Activated CD4-positive, alpha-beta memory T cell treated with anti-CD3 and anti-CD28 coated beads, Interleukin-2, amount 10 ng/mL, durations not matched to agents 7 days and 5 days (primary cell): ENCODE measurements at regions of chr2 and their contacts with region 1.

Region 1: DNA sequence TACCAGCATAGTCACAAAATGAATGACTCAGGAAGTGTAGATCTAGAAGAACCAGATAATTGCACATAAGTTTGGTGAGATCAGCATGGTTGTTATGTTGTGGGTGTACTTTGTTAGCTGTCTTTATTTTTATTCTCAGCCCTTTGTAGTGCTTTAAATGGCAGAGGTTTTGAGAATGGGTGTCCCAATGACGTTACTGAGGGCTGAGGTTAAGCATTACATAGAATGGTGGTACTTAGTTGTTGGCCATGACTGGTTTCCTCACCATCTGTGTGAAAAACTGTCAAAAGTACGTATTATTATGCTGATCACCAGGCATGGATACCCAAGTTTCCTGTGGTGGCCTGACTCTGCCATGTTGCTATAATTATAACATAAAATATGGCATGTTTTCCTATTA is 165.8 kb downstream of the UBE2E3 start:
- DNase-seq: no peak
- H3K4me3 Mint-ChIP-seq: no peak overlapping the region
- H3K27ac Mint-ChIP-seq: peak overlapping the region; percentile 42
- H3K4me1 Mint-ChIP-seq: peaks cover 62% of the 10 kb centered on the region
- H3K27me3 Mint-ChIP-seq: peaks cover under 1% of the 10 kb centered on the region

Region 2: DNA sequence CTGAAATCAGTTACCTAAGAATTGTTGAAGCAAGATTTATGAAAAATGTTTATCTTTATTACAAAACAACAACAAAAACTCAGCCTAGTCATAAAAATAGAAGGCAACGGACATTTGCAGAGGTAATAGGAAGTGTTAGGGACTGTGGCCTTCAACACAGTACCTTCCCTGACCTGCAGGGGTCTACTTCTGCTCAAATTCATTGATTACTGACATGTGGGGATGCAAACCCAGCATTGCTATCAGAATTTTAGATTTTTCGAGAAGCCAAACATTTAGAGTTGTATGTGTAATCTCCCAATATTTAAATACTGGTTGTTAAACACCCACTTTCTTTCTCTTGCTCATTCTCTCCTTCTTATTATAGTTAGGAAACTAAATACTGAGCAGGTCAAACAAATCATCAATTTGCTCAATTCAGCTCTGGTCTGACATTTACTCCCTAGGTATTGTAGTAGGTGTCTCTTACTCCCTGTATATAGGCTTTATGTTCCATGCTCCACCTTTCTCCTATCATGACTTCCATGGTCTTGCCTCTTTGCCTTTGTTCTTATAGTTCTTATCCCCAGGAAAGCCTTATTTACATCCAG is 32.7 kb after region 1 on chr2:
- CTCF ChIA-PET with region 1: interaction called, 10 read pairs
- POLR2A ChIA-PET with region 1: interaction called, 5 read pairs
- DNase-seq: peak; percentile 60
- H3K4me3 Mint-ChIP-seq: no peak overlapping the region
- H3K27ac Mint-ChIP-seq: peak overlapping the region; percentile 67
- H3K4me1 Mint-ChIP-seq: peaks cover 62% of the 10 kb centered on the region
- H3K27me3 Mint-ChIP-seq: no peaks in the 10 kb centered on the region